ENCODE measurements at regions of chr14 and their contacts with region 1.

Region 1: DNA sequence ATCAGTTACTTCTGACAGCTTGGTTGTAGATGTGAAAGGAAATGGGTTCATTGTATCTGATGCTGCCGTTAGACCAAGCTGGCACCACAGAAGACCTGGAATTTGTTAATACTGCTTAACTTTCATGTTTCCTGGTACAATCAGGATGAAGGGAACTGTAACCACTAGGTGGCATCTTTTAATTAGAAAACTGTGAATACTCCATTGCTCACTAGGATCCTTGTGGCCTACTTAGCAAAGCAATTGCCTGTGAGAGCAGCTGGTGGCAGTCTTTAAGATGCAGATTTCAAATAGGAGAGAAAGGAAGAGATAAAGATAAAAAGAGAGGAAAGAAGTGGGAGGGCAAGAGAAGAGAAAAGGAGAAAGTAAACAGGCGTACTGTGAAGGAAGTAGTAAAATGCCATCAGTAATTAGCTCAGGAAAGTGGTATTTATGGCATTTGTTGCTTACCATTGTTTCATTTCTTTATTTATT is 114.5 kb downstream of the RAD51B start:
- DNase-seq: peak; percentile 89
- H3K4me3 ChIP-seq: no peak overlapping the region
- H3K27ac ChIP-seq: peak overlapping the region; percentile 27
- H3K4me1 ChIP-seq: peaks cover 11% of the 10 kb centered on the region
- H3K27me3 ChIP-seq: no peaks in the 10 kb centered on the region
- CTCF ChIP-seq: peak; percentile 46 to 57
- POLR2A ChIP-seq: no peak

Region 2: DNA sequence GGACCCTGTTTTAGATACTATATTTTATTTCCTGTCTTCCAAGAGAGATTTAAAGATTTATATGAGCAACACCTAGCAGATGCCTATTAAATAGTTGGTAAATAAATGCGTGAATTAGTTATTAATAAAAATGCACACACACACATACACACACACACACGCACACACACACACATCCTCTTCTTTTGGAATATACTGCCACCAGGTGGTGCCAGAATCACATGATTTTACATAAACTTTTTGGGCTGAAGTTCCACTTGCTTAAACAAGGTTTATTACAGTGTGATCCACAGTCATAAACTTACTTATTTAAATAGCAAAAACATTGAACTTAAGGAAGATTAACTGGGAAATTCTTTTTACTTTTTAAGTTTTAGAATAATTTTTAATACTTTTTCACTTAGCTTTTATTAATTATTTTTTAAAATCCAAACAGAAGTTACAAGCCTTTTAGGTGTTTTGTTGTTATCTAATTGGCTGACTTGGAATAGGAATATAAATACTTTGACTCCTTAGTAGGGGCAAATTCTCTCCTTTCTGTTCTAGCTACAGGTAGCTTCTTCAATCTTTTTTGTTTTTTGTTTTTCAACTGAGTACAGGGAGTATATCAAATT is 96.9 kb before region 1 on chr14:
- CTCF ChIA-PET with region 1: interaction called, 18 read pairs
- POLR2A ChIA-PET with region 1: no interaction called
- dilution Hi-C with region 1: no loop called
- intact Hi-C with region 1: loop called (anchors 2 kb)
- DNase-seq: peak; percentile 82
- H3K4me3 ChIP-seq: no peak overlapping the region
- H3K27ac ChIP-seq: no peak overlapping the region
- H3K4me1 ChIP-seq: no peaks in the 10 kb centered on the region
- H3K27me3 ChIP-seq: no peaks in the 10 kb centered on the region
- CTCF ChIP-seq: peak; percentile 40 to 49
- POLR2A ChIP-seq: no peak

Region 3: DNA sequence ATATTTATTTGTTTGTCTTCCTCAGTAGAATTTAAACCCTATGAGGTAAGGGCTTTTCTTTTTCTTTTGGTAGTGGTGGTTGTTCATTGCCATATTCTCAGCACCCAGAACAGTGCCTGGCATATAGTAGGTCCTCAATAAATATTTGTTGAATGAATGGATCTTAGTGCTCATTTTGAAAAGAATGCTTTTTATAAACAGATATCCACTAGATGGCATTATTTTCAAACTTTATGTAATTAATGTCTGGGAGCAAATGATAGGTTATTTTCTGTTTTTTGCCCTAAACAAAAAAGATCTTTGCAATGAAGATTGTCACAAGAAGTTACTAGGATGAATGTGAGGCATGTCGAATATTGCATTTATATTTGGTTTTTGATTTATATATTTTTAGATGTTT is 50.3 kb before region 1 on chr14:
- CTCF ChIA-PET with region 1: interaction called, 21 read pairs
- POLR2A ChIA-PET with region 1: no interaction called
- dilution Hi-C with region 1: no loop called
- intact Hi-C with region 1: loop called (anchors 5 kb)
- DNase-seq: peak; percentile 44
- H3K4me3 ChIP-seq: no peak overlapping the region
- H3K27ac ChIP-seq: no peak overlapping the region
- H3K4me1 ChIP-seq: peaks cover 5% of the 10 kb centered on the region
- H3K27me3 ChIP-seq: no peaks in the 10 kb centered on the region
- CTCF ChIP-seq: no peak
- POLR2A ChIP-seq: no peak

Region 4: GRCh38 chr14:68816262-68816942 is 882.4 kb after region 1 on chr14:
- CTCF ChIA-PET with region 1: interaction called, 29 read pairs
- POLR2A ChIA-PET with region 1: no interaction called
- dilution Hi-C with region 1: loop called (anchors 25 kb)
- intact Hi-C with region 1: loop called (anchors 1 kb)
- DNase-seq: peak; percentile 89
- H3K4me3 ChIP-seq: peak overlapping the region in 1 of 3 experiments; percentile 24
- H3K27ac ChIP-seq: peak overlapping the region; percentile 71
- H3K4me1 ChIP-seq: peaks cover 21% of the 10 kb centered on the region
- H3K27me3 ChIP-seq: no peaks in the 10 kb centered on the region
- CTCF ChIP-seq: peak; percentile 95
- POLR2A ChIP-seq: peak; percentile 46

Region 5: GRCh38 chr14:68824517-68825347 is 890.7 kb after region 1 on chr14:
- CTCF ChIA-PET with region 1: interaction called, 32 read pairs
- POLR2A ChIA-PET with region 1: no interaction called
- dilution Hi-C with region 1: loop called (anchors 25 kb)
- intact Hi-C with region 1: no loop called
- DNase-seq: peak; percentile 66
- H3K4me3 ChIP-seq: no peak overlapping the region
- H3K27ac ChIP-seq: no peak overlapping the region
- H3K4me1 ChIP-seq: no peaks in the 10 kb centered on the region
- H3K27me3 ChIP-seq: no peaks in the 10 kb centered on the region
- CTCF ChIP-seq: peak; percentile 92 to 95
- POLR2A ChIP-seq: no peak

Region 6: GRCh38 chr14:68843471-68844209 is 909.6 kb after region 1 on chr14:
- CTCF ChIA-PET with region 1: interaction called, 38 read pairs
- POLR2A ChIA-PET with region 1: no interaction called
- dilution Hi-C with region 1: no loop called
- intact Hi-C with region 1: loop called (anchors 1 kb)
- DNase-seq: peak; percentile 75
- H3K4me3 ChIP-seq: no peak overlapping the region
- H3K27ac ChIP-seq: no peak overlapping the region
- H3K4me1 ChIP-seq: peaks cover 14% of the 10 kb centered on the region
- H3K27me3 ChIP-seq: no peaks in the 10 kb centered on the region
- CTCF ChIP-seq: peak; percentile 92 to 95
- POLR2A ChIP-seq: no peak

Measured in endothelial cell of umbilical vein (primary cell).